ENCODE measurements at regions of chr5 and their contacts with region 1.

Region 1: GRCh38 chr5:157603333-157604190 is 28.0 kb upstream of the ADAM19 start:
- DNase-seq: peak; percentile 87 to 97 (median 93)
- H3K4me3 ChIP-seq: peak overlapping the region in 1 of 3 experiments; percentile 36
- H3K4me3 Mint-ChIP-seq: peak overlapping the region in 1 of 2 donors; percentile 48
- H3K27ac ChIP-seq: peak overlapping the region in 1 of 2 donors; percentile 85
- H3K27ac Mint-ChIP-seq: peak overlapping the region; percentile 78 to 96 (median 90)
- H3K4me1 ChIP-seq: peaks cover 43 to 63% of the 10 kb centered on the region in 2 donors
- H3K4me1 Mint-ChIP-seq: peaks cover 52% of the 10 kb centered on the region
- H3K27me3 ChIP-seq: no peaks in the 10 kb centered on the region
- H3K27me3 Mint-ChIP-seq: peaks cover 0 to 12% (median 5%) of the 10 kb centered on the region in 3 donors
- CTCF ChIP-seq: no peak

Region 2: GRCh38 chr5:157558041-157558595 is 45.4 kb before region 1 on chr5:
- intact Hi-C with region 1: loop called in 1 of 2 experiments (anchors 10 kb)
- DNase-seq: no peak
- H3K4me3 ChIP-seq: no peak overlapping the region
- H3K4me3 Mint-ChIP-seq: no peak overlapping the region
- H3K27ac ChIP-seq: no peak overlapping the region
- H3K27ac Mint-ChIP-seq: no peak overlapping the region
- H3K4me1 ChIP-seq: peaks cover 58 to 78% of the 10 kb centered on the region in 2 donors
- H3K4me1 Mint-ChIP-seq: peaks cover 68% of the 10 kb centered on the region
- H3K27me3 ChIP-seq: no peaks in the 10 kb centered on the region
- H3K27me3 Mint-ChIP-seq: peaks cover 0 to 2% (median 2%) of the 10 kb centered on the region in 3 donors
- CTCF ChIP-seq: no peak

Region 3: GRCh38 chr5:157665467-157666100 is 62.0 kb after region 1 on chr5:
- intact Hi-C with region 1: no loop called
- DNase-seq: peak; percentile 84 to 97 (median 95)
- H3K4me3 ChIP-seq: no peak overlapping the region
- H3K4me3 Mint-ChIP-seq: peak overlapping the region in 1 of 2 donors; percentile 76
- H3K27ac ChIP-seq: peak overlapping the region in 1 of 2 donors; percentile 16
- H3K27ac Mint-ChIP-seq: peak overlapping the region; percentile 28 to 93 (median 83)
- H3K4me1 ChIP-seq: peaks cover 10 to 12% of the 10 kb centered on the region in 2 donors
- H3K4me1 Mint-ChIP-seq: peaks cover 18% of the 10 kb centered on the region
- H3K27me3 ChIP-seq: peaks cover 0 to 10% of the 10 kb centered on the region in 2 donors
- H3K27me3 Mint-ChIP-seq: peaks cover 14 to 26% (median 22%) of the 10 kb centered on the region in 3 donors
- CTCF ChIP-seq: no peak